Activated B cell treated with CpG ODN at 0.5 μM for 24 hours (primary cell): ENCODE measurements at regions of chr7 and their contacts with region 1.

Region 1: GRCh38 chr7:81499262-81500116 is 270.4 kb downstream of the HGF start:
- DNase-seq: no peak
- ATAC-seq: no peak
- H3K4me3 Mint-ChIP-seq: no peak overlapping the region
- H3K27ac Mint-ChIP-seq: no peak overlapping the region
- H3K4me1 Mint-ChIP-seq: no peaks in the 10 kb centered on the region
- H3K27me3 Mint-ChIP-seq: no peaks in the 10 kb centered on the region
- CTCF ChIP-seq: no peak

Region 2: GRCh38 chr7:81956520-81956919 is 457.0 kb after region 1 on chr7:
- CTCF ChIA-PET with region 1: no interaction called
- POLR2A ChIA-PET with region 1: no interaction called
- intact Hi-C with region 1: loop called (anchors 1 kb)
- DNase-seq: no peak
- ATAC-seq: no peak
- H3K4me3 Mint-ChIP-seq: no peak overlapping the region
- H3K27ac Mint-ChIP-seq: no peak overlapping the region
- H3K4me1 Mint-ChIP-seq: no peaks in the 10 kb centered on the region
- H3K27me3 Mint-ChIP-seq: no peaks in the 10 kb centered on the region
- CTCF ChIP-seq: no peak

Region 3: DNA sequence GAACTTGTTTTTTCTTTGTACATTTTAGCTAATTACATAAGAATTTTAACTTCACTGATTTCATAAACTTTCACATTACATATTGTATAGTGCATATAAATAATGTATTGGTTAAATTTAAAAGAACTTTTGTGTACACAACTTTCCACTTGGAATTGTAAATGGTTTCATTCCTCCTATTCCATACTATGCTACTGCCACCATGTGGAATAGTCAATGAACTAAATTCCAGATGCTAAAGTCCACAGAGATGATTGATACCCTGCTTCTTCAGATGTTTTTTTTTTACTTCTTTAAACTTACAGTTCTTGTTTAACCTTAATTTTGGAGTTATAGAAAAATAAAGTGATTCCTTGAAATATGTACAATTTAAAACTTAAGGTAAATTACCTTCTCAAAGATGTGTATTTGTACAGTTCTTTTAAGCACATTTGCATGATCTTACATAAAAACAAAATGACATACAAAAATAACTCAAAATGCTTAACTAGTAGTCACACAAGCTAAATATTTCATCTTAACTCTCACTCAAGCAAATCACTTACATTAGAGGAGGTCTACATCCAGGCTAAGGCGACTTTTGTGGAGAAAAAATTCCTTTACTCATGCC is 518.0 kb after region 1 on chr7:
- CTCF ChIA-PET with region 1: no interaction called
- POLR2A ChIA-PET with region 1: no interaction called
- intact Hi-C with region 1: loop called (anchors 5 kb)
- DNase-seq: no peak
- ATAC-seq: no peak
- H3K4me3 Mint-ChIP-seq: no peak overlapping the region
- H3K27ac Mint-ChIP-seq: no peak overlapping the region
- H3K4me1 Mint-ChIP-seq: no peaks in the 10 kb centered on the region
- H3K27me3 Mint-ChIP-seq: no peaks in the 10 kb centered on the region
- CTCF ChIP-seq: no peak

Region 4: DNA sequence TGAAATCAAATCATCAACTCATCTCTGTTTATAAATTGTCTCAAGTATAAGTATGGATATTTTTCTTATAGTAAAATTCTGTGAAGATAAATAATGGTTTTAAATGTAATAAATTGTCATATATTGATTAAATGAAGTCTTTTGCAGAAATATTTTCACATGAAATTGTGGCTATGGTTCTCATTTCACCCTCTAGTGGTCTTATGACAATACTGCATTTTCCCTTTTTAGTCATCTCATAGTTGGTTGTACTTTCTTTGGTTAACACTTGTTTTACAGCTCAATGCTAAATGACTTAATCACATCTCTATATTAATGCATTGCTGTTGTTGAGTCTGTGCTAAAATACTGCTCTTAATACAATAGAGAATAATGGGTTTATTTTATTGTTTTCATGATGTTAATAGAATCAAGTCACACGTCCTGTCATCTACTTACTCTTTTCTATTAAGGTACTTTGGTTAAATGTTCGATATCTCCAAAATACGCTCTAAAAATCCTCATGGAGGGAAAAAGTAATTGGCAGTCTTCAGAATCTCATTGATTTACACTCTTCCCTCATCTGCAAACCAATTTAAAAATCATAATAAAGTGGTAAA is 982.1 kb after region 1 on chr7:
- CTCF ChIA-PET with region 1: no interaction called
- POLR2A ChIA-PET with region 1: no interaction called
- intact Hi-C with region 1: loop called (anchors 5 kb)
- DNase-seq: no peak
- ATAC-seq: no peak
- H3K4me3 Mint-ChIP-seq: no peak overlapping the region
- H3K27ac Mint-ChIP-seq: no peak overlapping the region
- H3K4me1 Mint-ChIP-seq: no peaks in the 10 kb centered on the region
- H3K27me3 Mint-ChIP-seq: no peaks in the 10 kb centered on the region
- CTCF ChIP-seq: no peak

Region 5: GRCh38 chr7:82572195-82572880 is 1072.8 kb after region 1 on chr7:
- CTCF ChIA-PET with region 1: interaction called, 5 read pairs
- POLR2A ChIA-PET with region 1: no interaction called
- intact Hi-C with region 1: loop called (anchors 1 kb)
- DNase-seq: peak; percentile 17
- ATAC-seq: peak; percentile 37
- H3K4me3 Mint-ChIP-seq: no peak overlapping the region
- H3K27ac Mint-ChIP-seq: no peak overlapping the region
- H3K4me1 Mint-ChIP-seq: no peaks in the 10 kb centered on the region
- H3K27me3 Mint-ChIP-seq: no peaks in the 10 kb centered on the region
- CTCF ChIP-seq: peak; percentile 22